Right ventricle myocardium superior (tissue), 1 donor: ENCODE measurements at regions of chr3 and their contacts with region 1.

Region 1: DNA sequence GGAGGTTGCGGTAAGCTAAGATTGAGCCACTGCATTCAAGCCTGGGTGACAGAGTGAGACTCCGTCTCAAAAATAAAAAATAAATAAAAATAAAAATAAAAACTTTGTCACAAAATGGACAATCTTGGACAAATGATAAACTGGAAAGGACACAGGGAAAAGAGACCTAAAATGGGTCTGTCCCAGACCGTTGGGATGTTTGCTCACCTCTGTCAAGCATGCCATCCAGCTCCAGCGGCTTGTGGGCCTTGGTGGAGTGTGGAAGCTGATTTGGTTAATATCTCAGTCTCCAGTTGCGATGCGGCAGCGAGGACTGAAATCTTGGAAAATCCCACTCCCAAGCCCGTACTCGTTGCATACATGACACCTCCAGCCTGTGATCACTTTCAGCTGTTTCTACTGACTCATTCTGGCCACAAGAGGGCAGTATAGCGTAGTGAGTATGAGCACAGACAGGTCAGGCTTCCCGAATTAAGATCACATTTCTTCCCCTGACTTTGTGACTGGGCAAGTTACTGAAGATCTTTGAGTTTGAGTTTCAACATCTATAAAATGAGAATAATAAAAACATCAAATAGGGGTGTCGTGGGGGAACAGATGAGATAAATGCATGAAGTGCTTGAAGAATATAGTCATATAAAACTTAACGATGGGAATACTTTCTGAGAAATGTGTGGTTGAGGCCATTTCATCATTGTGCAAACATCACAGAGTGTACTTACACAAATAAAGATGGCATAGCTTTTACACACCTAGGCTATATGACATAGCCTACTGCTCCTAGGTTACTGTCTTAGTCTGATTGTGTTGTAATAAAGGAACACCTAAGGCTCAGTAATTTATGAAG is 19.6 kb upstream of the MOBP start:
- DNase-seq: no peak
- ATAC-seq: peak; percentile 95

Region 2: DNA sequence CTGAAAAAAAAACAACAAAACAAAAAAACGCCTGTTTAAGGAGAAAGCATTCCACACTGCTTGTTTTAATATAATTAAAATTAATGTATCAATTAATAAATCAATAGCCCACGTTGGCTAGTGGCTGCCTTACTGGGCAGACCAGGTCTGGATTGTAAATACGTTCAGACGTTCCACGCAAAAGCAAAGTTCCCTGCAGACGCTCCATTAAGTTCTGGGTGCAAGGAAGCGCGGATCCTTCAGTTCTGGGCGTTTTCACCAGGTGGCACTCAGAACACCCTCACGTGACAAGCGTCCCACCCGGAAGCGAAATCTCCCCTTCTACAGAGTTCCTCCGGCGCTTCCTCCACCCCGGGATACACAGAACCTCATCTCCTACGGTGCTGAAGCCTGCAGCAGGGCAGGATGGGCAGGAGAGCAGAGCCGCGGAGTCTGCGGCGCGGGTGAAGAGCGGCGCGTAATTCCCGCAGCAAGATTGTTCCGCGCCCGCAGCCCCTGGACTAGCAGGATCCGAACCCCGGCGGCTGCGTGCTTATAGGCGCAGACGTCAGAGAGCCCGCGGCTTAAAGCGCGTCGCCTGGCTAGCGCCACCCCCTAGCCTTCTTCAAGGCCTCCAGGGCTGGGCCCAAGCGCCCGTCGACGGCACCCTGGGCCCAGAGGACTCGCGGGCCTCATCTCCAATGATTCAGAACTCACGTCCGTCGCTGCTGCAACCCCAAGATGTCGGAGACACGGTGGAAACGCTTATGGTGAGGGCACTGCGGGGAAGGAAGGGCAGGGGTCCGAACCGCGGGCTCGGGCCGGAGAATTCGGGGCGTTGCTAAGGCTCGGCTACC is 64.6 kb before region 1 on chr3 and contains the start of gene SLC25A38:
- intact Hi-C with region 1: no loop called
- DNase-seq: peak; percentile 82
- ATAC-seq: peak; percentile 79
- total RNA-seq, gene SLC25A38: 14.4 TPM

Region 3: DNA sequence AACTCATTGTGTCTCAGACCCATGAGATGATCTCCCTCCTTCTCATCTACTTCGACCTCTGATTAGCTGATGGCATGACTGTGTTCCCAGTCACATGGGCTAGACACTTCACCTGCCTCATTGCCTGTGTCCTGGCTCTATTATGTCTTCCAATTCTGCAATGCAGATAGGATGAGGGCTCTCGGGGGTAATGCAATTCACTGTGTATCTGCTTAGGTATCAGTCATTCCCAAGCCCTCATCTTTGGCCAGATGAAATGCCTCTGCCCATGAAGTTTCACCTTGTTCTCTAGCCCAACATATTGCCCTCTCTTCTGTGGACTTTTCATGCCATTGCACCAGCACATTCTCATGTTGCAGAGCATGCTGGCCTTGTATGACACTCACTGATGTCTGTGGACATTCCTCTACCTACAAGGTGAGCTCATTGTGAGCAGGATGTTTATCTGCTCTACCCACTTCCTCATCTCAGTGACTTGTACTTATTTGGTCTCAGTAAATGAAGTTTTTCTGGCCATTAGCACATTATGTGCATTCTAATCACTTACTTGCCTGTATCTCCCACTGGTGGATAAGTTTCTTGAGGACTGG is 51.9 kb after region 1 on chr3:
- intact Hi-C with region 1: loop called (anchors 2 kb)
- DNase-seq: no peak
- ATAC-seq: no peak